ENCODE measurements at regions of chr5 and their contacts with region 1.

Region 1: DNA sequence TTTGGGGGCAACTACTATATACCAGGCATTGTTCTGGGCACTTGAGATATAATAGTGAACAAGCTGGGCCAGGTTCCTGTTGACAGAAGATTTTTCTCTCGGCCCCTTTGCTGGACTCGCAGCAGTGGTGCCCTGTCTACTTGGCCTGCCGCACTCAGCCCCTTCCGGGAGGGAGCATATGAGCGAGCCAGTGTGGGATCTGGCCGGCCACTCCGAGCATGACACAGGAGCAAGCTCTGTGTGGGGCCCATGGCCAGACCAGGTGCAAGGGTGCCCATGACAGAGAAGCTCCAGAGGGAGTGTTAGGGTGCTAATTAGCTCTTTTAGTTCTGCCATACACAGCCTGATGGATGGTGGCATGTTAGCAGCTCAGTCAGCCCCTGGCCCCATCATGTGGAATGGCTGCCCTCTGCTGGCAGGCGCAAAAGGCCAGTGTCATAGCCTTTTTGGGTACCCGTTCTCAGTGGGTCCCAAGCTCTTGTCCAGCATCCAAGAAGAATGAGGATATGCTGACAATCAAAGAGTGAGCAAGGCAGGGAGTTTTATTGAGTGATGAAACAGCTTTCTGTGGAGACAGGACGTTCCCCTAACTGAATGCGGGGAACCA is 9.3 kb upstream of the KIF4B start:
- DNase-seq: peak; percentile 56
- H3K4me3 ChIP-seq: no peak overlapping the region
- H3K27ac ChIP-seq: no peak overlapping the region
- H3K4me1 ChIP-seq: peaks cover 4% of the 10 kb centered on the region
- H3K27me3 ChIP-seq: no peaks in the 10 kb centered on the region
- CTCF ChIP-seq: peak; percentile 60 to 73
- POLR2A ChIP-seq: no peak

Region 2: GRCh38 chr5:154072414-154073171 is 931.6 kb before region 1 on chr5:
- CTCF ChIA-PET with region 1: no interaction called
- POLR2A ChIA-PET with region 1: no interaction called
- dilution Hi-C with region 1: no loop called
- intact Hi-C with region 1: no loop called
- DNase-seq: peak; percentile 82
- H3K4me3 ChIP-seq: no peak overlapping the region
- H3K27ac ChIP-seq: no peak overlapping the region
- H3K4me1 ChIP-seq: no peaks in the 10 kb centered on the region
- H3K27me3 ChIP-seq: peaks cover 0 to 1% of the 10 kb centered on the region in 2 experiments
- CTCF ChIP-seq: peak; percentile 84 to 92
- POLR2A ChIP-seq: no peak

Region 3: GRCh38 chr5:154541553-154541952 is 462.7 kb before region 1 on chr5:
- CTCF ChIA-PET with region 1: no interaction called
- POLR2A ChIA-PET with region 1: no interaction called
- dilution Hi-C with region 1: no loop called
- intact Hi-C with region 1: no loop called
- DNase-seq: no peak
- H3K4me3 ChIP-seq: no peak overlapping the region
- H3K27ac ChIP-seq: no peak overlapping the region
- H3K4me1 ChIP-seq: no peaks in the 10 kb centered on the region
- H3K27me3 ChIP-seq: peaks cover 0 to 2% of the 10 kb centered on the region in 2 experiments
- CTCF ChIP-seq: no peak
- POLR2A ChIP-seq: no peak

Region 4: GRCh38 chr5:155082401-155082800 is 78.2 kb after region 1 on chr5:
- CTCF ChIA-PET with region 1: no interaction called
- POLR2A ChIA-PET with region 1: no interaction called
- dilution Hi-C with region 1: no loop called
- intact Hi-C with region 1: loop called (anchors 2 kb)
- DNase-seq: peak; percentile 63
- H3K4me3 ChIP-seq: no peak overlapping the region
- H3K27ac ChIP-seq: peak overlapping the region; percentile 60
- H3K4me1 ChIP-seq: peaks cover 17% of the 10 kb centered on the region
- H3K27me3 ChIP-seq: no peaks in the 10 kb centered on the region
- CTCF ChIP-seq: no peak
- POLR2A ChIP-seq: no peak